Caco-2 (cell line): ENCODE measurements at regions of chr7 and their contacts with region 1.

Region 1: DNA sequence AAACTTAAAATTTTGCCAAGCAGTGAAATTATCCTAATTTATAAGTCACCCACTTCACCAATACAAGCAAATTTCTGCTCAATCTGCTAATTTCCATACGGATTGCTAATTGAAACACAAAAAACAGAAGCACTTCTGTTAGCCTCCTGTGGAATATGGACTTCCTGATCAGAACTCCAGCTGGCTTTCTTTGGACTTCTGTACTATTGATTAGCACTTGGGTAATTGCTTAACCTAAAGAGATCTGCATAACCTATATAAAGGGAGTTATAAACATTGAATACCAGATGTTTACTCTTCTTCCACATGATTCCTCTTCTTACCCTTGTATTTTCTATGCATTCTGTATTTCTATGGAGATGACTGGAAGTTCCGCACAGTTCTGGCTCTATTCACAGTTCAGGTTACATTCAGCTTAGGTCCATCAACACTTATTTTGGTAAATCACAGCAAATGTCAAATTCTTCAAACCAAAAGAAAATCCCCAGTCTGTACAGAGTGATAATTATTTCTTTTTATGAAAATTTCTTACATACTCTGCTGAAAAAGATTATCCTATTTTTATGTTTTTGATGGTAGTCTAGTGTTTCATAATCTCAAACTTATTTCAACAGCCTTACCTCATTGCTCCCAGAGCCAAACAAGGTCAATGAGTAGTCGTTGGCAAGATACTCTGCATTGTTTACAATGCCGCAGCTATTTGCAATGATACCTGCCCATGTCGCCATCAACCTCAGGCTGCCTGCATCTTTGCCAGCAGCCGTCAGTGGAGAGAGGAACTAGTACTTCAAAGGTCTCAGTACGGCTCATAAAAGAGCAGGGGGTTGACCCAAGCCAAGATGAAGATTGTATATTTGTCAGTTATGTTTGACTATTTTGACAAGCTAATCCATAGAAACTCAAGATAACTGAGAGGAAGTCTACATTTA is 225.6 kb downstream of the AHR start:
- DNase-seq: peak; percentile 77 to 83
- H3K4me3 ChIP-seq: no peak overlapping the region
- H3K4me3 Mint-ChIP-seq: peak overlapping the region; percentile 20
- H3K27ac Mint-ChIP-seq: peak overlapping the region; percentile 19
- H3K4me1 ChIP-seq: peaks cover 19% of the 10 kb centered on the region
- H3K4me1 Mint-ChIP-seq: no peaks in the 10 kb centered on the region
- H3K27me3 ChIP-seq: no peaks in the 10 kb centered on the region
- H3K27me3 Mint-ChIP-seq: no peaks in the 10 kb centered on the region
- CTCF ChIP-seq: no peak

Region 2: GRCh38 chr7:16891338-16891737 is 632.7 kb before region 1 on chr7:
- CTCF ChIA-PET with region 1: no interaction called
- POLR2A ChIA-PET with region 1: no interaction called
- intact Hi-C with region 1: loop called (anchors 10 kb)
- DNase-seq: peak; percentile 64 to 74
- H3K4me3 ChIP-seq: no peak overlapping the region
- H3K4me3 Mint-ChIP-seq: no peak overlapping the region
- H3K27ac Mint-ChIP-seq: peak overlapping the region; percentile 35
- H3K4me1 ChIP-seq: peaks cover 31% of the 10 kb centered on the region
- H3K4me1 Mint-ChIP-seq: peaks cover 14% of the 10 kb centered on the region
- H3K27me3 ChIP-seq: no peaks in the 10 kb centered on the region
- H3K27me3 Mint-ChIP-seq: no peaks in the 10 kb centered on the region
- CTCF ChIP-seq: peak; percentile 46 to 75

Region 3: DNA sequence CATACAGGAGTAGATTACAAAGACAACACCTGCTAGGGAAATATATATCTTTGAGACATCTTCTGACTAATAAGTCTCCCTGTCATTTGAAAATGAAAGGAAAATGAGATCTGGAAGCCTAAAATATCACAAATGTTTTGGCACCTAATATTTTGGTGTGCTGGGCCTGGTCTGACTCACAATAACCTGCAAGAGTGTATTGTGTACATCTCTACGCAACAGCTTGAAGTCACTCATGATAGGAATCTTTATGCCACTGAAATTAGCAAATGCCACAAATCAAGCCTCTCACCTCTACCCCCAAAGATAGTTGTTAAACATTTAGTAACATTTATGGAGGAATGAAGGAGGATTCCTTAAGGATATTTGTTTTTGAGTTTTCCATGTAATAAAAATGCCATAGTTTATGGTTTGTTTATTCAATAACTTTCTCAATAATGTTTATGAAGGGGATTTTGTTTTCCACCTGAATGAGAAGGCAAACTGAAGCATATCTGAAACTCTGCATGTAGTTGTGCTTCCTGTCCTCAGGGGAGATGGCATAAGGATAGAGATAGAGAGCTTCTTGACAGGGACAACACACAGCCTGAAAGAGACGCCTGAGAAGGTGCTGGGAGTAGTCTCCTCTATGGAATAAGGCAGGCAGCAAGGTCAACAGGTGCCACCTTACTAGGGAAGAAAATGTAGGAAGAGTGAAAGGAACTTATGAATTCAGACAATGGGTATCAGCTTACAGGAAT is 28.3 kb before region 1 on chr7:
- CTCF ChIA-PET with region 1: no interaction called
- POLR2A ChIA-PET with region 1: no interaction called
- intact Hi-C with region 1: loop called (anchors 1 kb)
- DNase-seq: peak in 1 of 2 experiments; percentile 26
- H3K4me3 ChIP-seq: no peak overlapping the region
- H3K4me3 Mint-ChIP-seq: no peak overlapping the region
- H3K27ac Mint-ChIP-seq: peak overlapping the region; percentile 22
- H3K4me1 ChIP-seq: peaks cover 24% of the 10 kb centered on the region
- H3K4me1 Mint-ChIP-seq: peaks cover 11% of the 10 kb centered on the region
- H3K27me3 ChIP-seq: no peaks in the 10 kb centered on the region
- H3K27me3 Mint-ChIP-seq: no peaks in the 10 kb centered on the region
- CTCF ChIP-seq: peak in 1 of 2 experiments; percentile 0

Region 4: DNA sequence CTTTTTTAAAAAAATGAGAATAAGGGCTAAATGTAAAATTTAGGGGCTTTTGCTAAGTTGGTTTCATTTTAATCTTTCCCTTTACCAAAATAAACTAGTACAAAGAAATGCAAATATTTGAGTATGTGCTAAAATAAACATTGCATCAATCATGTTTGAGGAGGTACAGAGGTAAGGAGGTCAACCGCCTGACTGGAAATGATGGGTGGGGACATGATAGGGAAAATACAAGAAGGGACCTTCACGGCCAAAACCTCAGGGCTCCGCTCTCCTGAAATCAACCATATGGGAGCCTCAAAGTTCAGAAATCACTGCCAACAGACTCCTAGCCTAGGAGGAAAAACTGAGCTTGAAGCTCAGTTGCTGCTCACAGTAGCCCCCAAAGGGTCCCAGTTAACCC is 18.0 kb before region 1 on chr7:
- CTCF ChIA-PET with region 1: no interaction called
- POLR2A ChIA-PET with region 1: no interaction called
- intact Hi-C with region 1: loop called (anchors 1 kb)
- DNase-seq: peak; percentile 49 to 69
- H3K4me3 ChIP-seq: no peak overlapping the region
- H3K4me3 Mint-ChIP-seq: no peak overlapping the region
- H3K27ac Mint-ChIP-seq: no peak overlapping the region
- H3K4me1 ChIP-seq: peaks cover 32% of the 10 kb centered on the region
- H3K4me1 Mint-ChIP-seq: peaks cover 20% of the 10 kb centered on the region
- H3K27me3 ChIP-seq: no peaks in the 10 kb centered on the region
- H3K27me3 Mint-ChIP-seq: no peaks in the 10 kb centered on the region
- CTCF ChIP-seq: no peak

Region 5: GRCh38 chr7:17559388-17559787 is 35.3 kb after region 1 on chr7:
- CTCF ChIA-PET with region 1: no interaction called
- POLR2A ChIA-PET with region 1: no interaction called
- intact Hi-C with region 1: loop called (anchors 2 kb)
- DNase-seq: no peak
- H3K4me3 ChIP-seq: no peak overlapping the region
- H3K4me3 Mint-ChIP-seq: peak overlapping the region; percentile 6
- H3K27ac Mint-ChIP-seq: peak overlapping the region; percentile 67
- H3K4me1 ChIP-seq: peaks cover 23% of the 10 kb centered on the region
- H3K4me1 Mint-ChIP-seq: peaks cover 24% of the 10 kb centered on the region
- H3K27me3 ChIP-seq: no peaks in the 10 kb centered on the region
- H3K27me3 Mint-ChIP-seq: no peaks in the 10 kb centered on the region
- CTCF ChIP-seq: no peak

Region 6: DNA sequence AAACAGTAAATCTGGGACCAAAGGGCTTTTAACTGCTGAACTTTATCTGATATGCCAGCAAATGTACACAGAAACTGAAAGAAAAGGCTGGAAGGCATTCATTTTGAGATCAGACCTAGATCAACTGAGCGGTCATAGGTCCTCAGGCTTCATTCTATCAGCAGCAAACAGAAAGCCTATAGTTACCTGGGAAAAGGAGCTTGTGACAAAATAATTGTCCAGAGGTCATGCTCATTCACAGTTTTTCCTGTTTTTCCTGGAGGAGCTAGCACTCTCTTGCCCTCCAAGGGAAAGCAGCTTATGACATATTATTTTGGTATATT is 94.5 kb after region 1 on chr7:
- CTCF ChIA-PET with region 1: no interaction called
- POLR2A ChIA-PET with region 1: no interaction called
- intact Hi-C with region 1: loop called (anchors 1 kb)
- DNase-seq: peak; percentile 66 to 80
- H3K4me3 ChIP-seq: peak overlapping the region; percentile 9; the same call in 1 of the 2 replicates
- H3K4me3 Mint-ChIP-seq: peak overlapping the region; percentile 67
- H3K27ac Mint-ChIP-seq: peak overlapping the region; percentile 83
- H3K4me1 ChIP-seq: peaks cover 35% of the 10 kb centered on the region
- H3K4me1 Mint-ChIP-seq: peaks cover 19% of the 10 kb centered on the region
- H3K27me3 ChIP-seq: no peaks in the 10 kb centered on the region
- H3K27me3 Mint-ChIP-seq: no peaks in the 10 kb centered on the region
- CTCF ChIP-seq: no peak